GM13976 (cell line): ENCODE measurements at regions of chr5 and their contacts with region 1.

Region 1: DNA sequence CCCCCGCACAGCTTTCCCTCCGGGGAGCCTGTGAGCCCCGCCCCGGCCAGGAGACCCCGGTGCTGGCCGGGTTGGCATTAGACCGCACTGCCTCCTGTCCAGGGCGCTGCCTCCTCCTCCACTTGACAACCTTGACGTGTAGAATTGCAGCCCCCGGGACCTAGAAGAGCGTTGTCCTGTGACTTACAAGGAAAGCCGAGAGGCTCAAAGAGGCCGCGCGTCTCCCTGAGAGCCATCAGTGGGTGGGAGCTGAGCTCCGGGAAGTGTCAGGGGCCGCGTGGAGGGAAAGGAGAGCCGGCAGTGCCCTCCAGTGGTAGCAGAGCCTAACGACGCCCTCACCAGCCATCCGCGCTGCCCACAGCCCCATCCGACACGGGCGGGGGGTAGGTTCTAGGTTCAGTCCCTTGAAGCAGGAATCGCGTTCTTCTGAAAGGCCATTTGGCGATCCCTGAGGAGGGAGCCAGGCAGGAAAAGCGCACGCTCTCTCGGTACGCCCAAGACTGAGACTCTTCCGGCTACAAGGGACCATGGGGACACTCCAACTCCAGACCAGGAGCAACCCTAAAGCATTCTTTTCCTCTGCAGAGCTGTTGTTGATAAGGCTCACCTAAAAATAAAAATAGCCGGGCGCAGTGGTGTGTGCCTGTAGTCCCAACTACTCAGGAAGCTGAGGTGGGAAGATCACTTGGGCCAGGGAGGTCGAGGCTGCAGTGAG is 40.6 kb upstream of the SAP30L start:
- DNase-seq: peak; percentile 93
- CTCF ChIP-seq: peak; percentile 77

Region 2: GRCh38 chr5:154060606-154061005 is 344.6 kb before region 1 on chr5:
- in situ Hi-C with region 1: loop called (anchors 10 kb)
- DNase-seq: no peak
- CTCF ChIP-seq: no peak

Region 3: GRCh38 chr5:154260224-154260927 is 144.9 kb before region 1 on chr5:
- in situ Hi-C with region 1: no loop called
- DNase-seq: no peak
- CTCF ChIP-seq: no peak

Region 4: GRCh38 chr5:154562244-154562880 is 157.1 kb after region 1 on chr5:
- in situ Hi-C with region 1: no loop called
- DNase-seq: no peak
- CTCF ChIP-seq: no peak